A549 (cell line): ENCODE measurements at regions of chr22 and their contacts with region 1.

Region 1: GRCh38 chr22:31107178-31107893 is at the start of gene SELENOM:
- DNase-seq: peak; percentile 80 to 96
- ATAC-seq: peak; percentile 94 to 98
- H3K4me3 ChIP-seq: peak within 1 kb of the TSS; percentile 66
- H3K27ac ChIP-seq: peak within 1 kb of the TSS; percentile 78 to 91
- H3K4me1 ChIP-seq: peaks cover 7% of the 10 kb centered on the region
- CTCF ChIP-seq: peak; percentile 77
- EP300 ChIP-seq: no peak
- POLR2A ChIP-seq: peak; percentile 55
- RAD21 ChIP-seq: peak; percentile 74 to 84
- polyA plus RNA-seq, gene SELENOM: 14.2 and 15.3 TPM in 2 replicates

Region 2: GRCh38 chr22:31089160-31090100 is 17.9 kb before region 1 on chr22:
- CTCF ChIA-PET with region 1: interaction called, 44 read pairs
- POLR2A ChIA-PET with region 1: interaction called, 3 read pairs
- DNase-seq: peak in 1 of 2 experiments; percentile 31
- ATAC-seq: peak; percentile 47 to 67; a peak in 4 of 6 replicates
- H3K4me3 ChIP-seq: no peak overlapping the region
- H3K27ac ChIP-seq: no peak overlapping the region
- H3K4me1 ChIP-seq: 0 out of 3 replicates have a peak, but pooled peaks cover 4% of the 10 kb centered on the region
- CTCF ChIP-seq: peak; percentile 63
- EP300 ChIP-seq: no peak
- POLR2A ChIP-seq: no peak
- RAD21 ChIP-seq: peak; percentile 63 to 65

Region 3: GRCh38 chr22:31127181-31127772 is 19.9 kb after region 1 on chr22:
- CTCF ChIA-PET with region 1: interaction called, 17 read pairs
- POLR2A ChIA-PET with region 1: interaction called, 8 read pairs
- DNase-seq: no peak
- ATAC-seq: no peak
- H3K4me3 ChIP-seq: no peak overlapping the region
- H3K27ac ChIP-seq: no peak overlapping the region
- H3K4me1 ChIP-seq: peaks cover 9% of the 10 kb centered on the region
- CTCF ChIP-seq: no peak
- EP300 ChIP-seq: no peak
- POLR2A ChIP-seq: no peak
- RAD21 ChIP-seq: no peak

Region 4: GRCh38 chr22:31139866-31140716 is 32.8 kb after region 1 on chr22 and contains the start of gene PLA2G3:
- CTCF ChIA-PET with region 1: interaction called, 17 read pairs
- POLR2A ChIA-PET with region 1: no interaction called
- DNase-seq: no peak
- ATAC-seq: peak in 1 of 2 experiments; percentile 28; a peak in 2 of 6 replicates
- H3K4me3 ChIP-seq: no peak within 1 kb of the TSS
- H3K27ac ChIP-seq: no peak within 1 kb of the TSS
- H3K4me1 ChIP-seq: no peaks in the 10 kb centered on the region
- CTCF ChIP-seq: no peak
- EP300 ChIP-seq: no peak
- POLR2A ChIP-seq: no peak
- RAD21 ChIP-seq: no peak
- polyA plus RNA-seq, gene PLA2G3: not detected in 2 replicates

Region 5: DNA sequence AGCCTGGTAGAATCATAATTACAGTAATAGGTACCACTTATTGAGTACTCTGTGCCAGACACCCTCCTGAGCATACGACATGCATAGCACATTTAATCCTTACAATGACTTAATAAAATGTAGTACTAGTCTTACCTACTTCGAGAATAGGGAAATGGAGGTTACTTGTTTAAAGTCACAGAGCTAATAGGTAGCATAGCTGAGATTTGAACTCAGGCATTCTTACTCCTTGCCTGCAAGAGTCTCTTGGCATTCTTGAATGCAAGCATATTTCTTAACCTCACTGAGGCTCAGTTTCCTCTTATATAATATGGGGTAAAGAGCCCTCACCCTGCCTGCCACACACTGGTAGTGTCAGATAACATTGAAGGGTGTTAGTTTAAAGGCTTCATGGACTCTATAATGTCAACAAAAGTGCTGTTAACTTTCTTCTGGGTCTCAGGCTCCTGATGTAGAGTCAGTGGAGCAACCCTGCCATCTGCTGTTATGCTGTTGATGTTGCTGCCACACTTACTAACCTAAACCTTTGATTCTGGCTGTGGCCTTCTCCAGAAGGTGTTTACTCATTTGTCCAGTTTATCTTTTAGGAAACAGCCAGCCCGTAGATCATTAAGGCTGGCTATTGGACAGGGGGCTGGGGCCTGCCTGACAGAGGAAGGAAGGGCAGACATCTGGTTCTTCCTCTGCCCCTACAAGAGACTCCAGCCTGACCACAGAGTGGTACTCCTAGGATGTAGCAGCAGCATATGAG is 123.7 kb after region 1 on chr22:
- CTCF ChIA-PET with region 1: interaction called, 13 read pairs
- POLR2A ChIA-PET with region 1: interaction called, 4 read pairs
- DNase-seq: peak in 1 of 2 experiments; percentile 40
- ATAC-seq: peak; percentile 73 to 78; a peak in 5 of 6 replicates
- H3K4me3 ChIP-seq: no peak overlapping the region
- H3K27ac ChIP-seq: no peak overlapping the region
- H3K4me1 ChIP-seq: 0 out of 3 replicates have a peak, but pooled peaks cover 6% of the 10 kb centered on the region
- CTCF ChIP-seq: peak; percentile 50
- EP300 ChIP-seq: no peak
- POLR2A ChIP-seq: no peak
- RAD21 ChIP-seq: peak; percentile 61 to 66